ENCODE measurements at regions of chr6 and their contacts with region 1.

Region 1: GRCh38 chr6:26532699-26533531 is 5.3 kb upstream of the HMGN4 start:
- DNase-seq: peak; percentile 93
- H3K4me3 Mint-ChIP-seq: peak overlapping the region; percentile 89
- H3K27ac Mint-ChIP-seq: peak overlapping the region; percentile 87
- H3K4me1 Mint-ChIP-seq: peaks cover 42% of the 10 kb centered on the region
- H3K27me3 Mint-ChIP-seq: no peaks in the 10 kb centered on the region

Region 2: GRCh38 chr6:26342106-26343004 is 190.6 kb before region 1 on chr6:
- CTCF ChIA-PET with region 1: interaction called, 18 read pairs
- POLR2A ChIA-PET with region 1: interaction called, 7 read pairs
- DNase-seq: peak; percentile 39
- H3K4me3 Mint-ChIP-seq: peak overlapping the region; percentile 80
- H3K27ac Mint-ChIP-seq: peak overlapping the region; percentile 56
- H3K4me1 Mint-ChIP-seq: peaks cover 33% of the 10 kb centered on the region
- H3K27me3 Mint-ChIP-seq: peaks cover 15% of the 10 kb centered on the region

Region 3: DNA sequence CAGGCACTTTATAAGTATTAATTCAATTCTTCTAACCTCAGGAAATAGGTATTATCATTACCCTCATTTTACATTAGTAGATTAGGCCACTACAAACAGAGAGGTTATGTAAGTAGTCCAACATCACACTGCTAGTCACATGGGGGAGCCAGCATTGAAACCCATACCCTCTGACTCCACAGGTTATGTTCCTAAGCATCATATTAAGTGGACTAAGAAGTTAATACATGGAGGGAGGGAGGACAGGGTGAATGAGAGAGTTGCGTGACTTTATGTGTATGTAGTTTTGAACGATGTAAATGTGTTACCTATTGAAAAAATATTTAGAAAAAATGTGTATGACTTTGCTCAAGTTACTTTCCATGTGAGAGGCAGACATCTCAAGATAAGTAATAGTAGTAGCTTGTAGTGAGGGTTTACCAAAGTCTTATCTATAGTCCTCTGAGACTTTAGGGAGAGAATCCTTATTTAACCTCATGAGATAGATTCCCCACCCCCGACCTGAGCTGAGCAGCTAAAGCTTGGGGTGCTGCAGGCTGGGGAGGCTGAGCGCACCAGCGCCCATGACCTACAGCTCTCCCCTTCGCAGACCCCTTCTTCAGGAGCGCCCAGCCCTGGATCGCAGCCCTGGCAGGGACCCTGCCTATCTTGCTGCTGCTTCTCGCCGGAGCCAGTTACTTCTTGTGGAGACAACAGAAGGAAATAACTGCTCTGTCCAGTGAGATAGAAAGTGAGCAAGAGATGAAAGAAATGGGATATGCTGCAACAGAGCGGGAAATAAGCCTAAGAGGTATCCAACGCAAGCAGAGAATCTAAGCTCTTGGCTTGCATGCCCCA is 160.4 kb before region 1 on chr6:
- CTCF ChIA-PET with region 1: no interaction called
- POLR2A ChIA-PET with region 1: no interaction called
- DNase-seq: no peak
- H3K4me3 Mint-ChIP-seq: no peak overlapping the region
- H3K27ac Mint-ChIP-seq: no peak overlapping the region
- H3K4me1 Mint-ChIP-seq: peaks cover 33% of the 10 kb centered on the region
- H3K27me3 Mint-ChIP-seq: no peaks in the 10 kb centered on the region

Region 4: DNA sequence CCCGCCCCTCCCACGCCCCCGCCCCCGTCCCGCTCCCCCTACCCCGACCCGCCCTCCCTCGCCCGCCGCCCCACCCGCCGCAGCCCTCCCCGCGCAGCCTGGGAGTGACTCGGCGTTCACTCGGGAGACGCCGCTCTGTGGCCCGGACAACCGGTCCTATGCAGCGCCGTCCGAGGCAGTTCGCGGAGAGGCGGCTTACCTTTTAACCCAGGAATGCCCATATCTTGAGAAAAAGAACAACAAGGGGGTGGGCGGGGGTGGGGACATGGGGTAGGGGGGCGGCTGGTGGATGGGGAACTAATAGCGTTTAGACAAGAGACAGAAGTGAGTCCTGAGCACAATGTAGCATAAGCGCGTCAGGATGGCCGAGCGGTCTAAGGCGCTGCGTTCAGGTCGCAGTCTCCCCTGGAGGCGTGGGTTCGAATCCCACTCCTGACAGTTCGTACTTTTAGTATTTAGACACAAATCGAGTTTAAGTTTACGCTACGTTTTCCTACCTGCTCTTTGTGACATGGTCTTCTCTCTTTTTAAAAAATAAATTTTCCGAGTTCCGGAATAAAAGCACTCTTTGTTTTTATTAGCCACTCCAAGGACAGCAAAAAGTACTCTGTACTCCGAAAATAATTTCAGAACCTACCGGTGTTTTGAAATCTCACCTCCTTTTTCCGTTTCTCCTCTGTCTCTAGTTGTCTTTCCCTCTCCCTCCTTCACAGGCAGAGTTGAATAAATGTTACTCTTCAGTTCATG is 11.9 kb before region 1 on chr6:
- CTCF ChIA-PET with region 1: interaction called, 4 read pairs
- POLR2A ChIA-PET with region 1: interaction called, 35 read pairs
- DNase-seq: peak; percentile 86
- H3K4me3 Mint-ChIP-seq: peak overlapping the region; percentile 75
- H3K27ac Mint-ChIP-seq: peak overlapping the region; percentile 88
- H3K4me1 Mint-ChIP-seq: peaks cover 32% of the 10 kb centered on the region
- H3K27me3 Mint-ChIP-seq: no peaks in the 10 kb centered on the region

Region 5: DNA sequence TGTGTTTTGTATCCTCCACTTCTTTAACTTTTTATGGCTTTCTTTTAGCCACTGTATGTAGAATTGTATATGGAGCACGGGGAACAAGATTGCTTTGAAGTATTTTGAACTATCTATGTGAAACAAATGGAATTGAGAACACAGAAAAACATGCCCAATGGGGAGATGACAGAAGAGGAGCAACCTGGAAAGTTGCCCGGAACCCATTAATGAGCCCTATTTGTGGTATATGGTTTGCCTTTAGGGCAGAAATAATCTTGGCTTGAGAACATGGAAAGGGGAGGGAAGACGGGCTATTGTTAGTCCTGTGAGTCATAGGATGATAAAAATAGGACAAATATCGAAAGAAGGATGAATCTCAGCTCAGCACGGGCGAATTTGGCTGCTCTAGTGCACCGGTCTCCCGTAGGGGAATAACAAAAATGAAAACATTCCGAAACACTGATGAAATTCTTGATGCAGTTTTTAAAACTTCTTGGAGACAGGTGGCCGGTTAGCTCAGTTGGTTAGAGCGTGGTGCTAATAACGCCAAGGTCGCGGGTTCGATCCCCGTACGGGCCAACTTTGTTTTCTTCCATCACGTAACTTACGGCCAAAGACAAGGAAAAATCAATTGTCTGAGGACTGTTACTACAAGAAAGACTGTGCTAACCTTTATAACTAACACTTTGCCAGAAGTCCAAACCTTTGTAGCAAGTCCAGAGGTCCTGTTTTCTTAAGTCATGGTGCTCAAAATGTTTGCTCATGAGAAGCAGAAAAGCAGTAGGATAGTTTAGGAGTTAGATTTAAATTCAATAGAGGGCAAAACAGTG is 20.9 kb after region 1 on chr6:
- CTCF ChIA-PET with region 1: interaction called, 19 read pairs
- POLR2A ChIA-PET with region 1: interaction called, 39 read pairs
- DNase-seq: peak; percentile 85
- H3K4me3 Mint-ChIP-seq: no peak overlapping the region
- H3K27ac Mint-ChIP-seq: no peak overlapping the region
- H3K4me1 Mint-ChIP-seq: peaks cover 26% of the 10 kb centered on the region
- H3K27me3 Mint-ChIP-seq: no peaks in the 10 kb centered on the region